GM10248 (cell line): ENCODE measurements at regions of chr3 and their contacts with region 1.

Region 1: DNA sequence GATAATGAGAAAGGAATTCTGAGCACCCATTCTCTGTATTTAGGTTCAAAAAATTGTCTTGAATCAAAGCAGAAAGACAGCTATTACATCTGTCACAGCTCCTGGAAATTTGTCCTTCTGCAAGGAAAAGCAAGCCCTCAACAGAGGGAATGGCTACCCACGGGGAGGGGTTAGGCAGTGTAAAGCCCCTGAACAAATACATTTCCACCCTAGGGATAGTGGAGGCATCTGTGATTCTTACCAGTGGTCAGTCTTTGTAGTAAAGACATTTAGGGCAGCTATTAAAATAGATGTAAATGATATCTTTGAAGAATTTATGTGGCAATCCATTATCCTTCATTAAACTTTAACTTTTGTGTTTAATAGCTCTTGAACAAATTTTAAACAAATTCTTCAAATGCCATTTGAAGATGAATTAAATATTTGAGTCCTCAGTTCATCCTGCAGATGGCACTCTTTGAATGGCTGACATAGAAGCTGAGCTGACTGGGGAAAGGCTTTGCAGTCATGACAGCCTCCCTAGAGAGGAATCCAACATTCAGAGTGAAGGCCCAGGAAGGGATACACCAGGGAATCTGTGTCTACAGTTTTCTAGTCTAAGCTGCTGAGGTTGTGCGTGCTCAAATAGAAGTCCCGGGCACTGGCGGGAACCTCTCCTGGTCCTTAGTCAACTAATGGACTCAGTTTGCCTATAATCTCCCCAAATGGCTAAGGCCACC is 359.7 kb upstream of the ROPN1 start:
- DNase-seq: peak; percentile 47
- CTCF ChIP-seq: peak; percentile 44

Region 2: GRCh38 chr3:124363476-124363875 is 11.9 kb after region 1 on chr3:
- CTCF ChIA-PET with region 1: interaction called, 17 read pairs
- POLR2A ChIA-PET with region 1: no interaction called
- DNase-seq: no peak
- CTCF ChIP-seq: no peak